ENCODE measurements at regions of chr11 and their contacts with region 1.

Region 1: DNA sequence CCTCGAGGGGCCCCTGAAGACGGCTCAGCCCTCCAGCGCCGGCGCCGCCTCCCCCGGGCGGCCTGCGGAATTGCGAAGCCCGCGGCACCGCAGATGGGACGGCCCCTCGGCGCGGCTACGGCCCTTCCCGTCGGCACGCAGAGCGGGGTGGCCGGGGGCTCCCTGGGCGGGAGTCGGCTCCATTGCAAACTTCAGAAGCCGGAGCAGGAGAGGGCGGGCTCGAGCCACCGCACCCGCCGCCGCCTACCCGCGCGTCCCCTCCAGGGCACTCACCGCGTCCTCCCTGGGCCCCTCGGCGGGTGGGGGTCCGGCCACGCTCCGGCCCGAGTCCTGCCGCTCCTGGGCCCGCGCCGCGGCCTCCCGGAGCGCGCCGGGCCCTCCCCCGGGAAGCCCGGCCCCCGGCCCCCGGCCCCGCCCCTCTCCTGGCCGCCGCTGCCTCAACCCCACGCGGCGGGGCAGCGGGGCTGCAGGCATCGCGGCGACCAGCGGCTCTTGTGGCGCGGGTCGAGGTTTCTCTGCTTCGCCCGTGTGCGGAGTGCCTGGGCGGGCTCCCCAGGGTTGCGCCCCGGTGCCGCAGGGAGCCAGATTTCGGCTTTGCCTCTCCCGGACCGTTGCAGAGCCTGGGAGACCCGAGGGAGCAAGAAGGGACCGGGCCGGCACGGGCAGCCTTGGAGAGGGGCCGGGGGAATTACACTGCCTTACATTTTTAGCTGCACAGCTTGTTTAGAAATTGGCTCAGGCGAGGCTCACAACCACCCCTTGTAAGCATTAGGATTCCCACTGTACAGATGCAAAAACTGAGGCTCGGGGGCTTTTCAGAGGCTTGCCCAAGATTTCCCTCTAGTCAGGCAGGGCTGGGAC is at the start of gene PACSIN3:
- DNase-seq: peak; percentile 49 to 84 (median 77)
- ATAC-seq: peak; percentile 56 to 61
- H3K4me3 ChIP-seq: peak within 1 kb of the TSS; percentile 70
- H3K27ac ChIP-seq: peak within 1 kb of the TSS; percentile 97
- H3K4me1 ChIP-seq: no peaks in the 10 kb centered on the region
- H3K27me3 ChIP-seq: no peaks in the 10 kb centered on the region
- total RNA-seq, gene PACSIN3: 110 to 156 (median 123) TPM

Region 2: GRCh38 chr11:47259178-47259977 is 73.1 kb after region 1 on chr11:
- intact Hi-C with region 1: loop called in 1 of 4 experiments (anchors 5 kb)
- DNase-seq: no peak
- ATAC-seq: peak; percentile 10 to 20
- H3K4me3 ChIP-seq: no peak overlapping the region
- H3K27ac ChIP-seq: peak overlapping the region; percentile 49
- H3K4me1 ChIP-seq: peaks cover 11% of the 10 kb centered on the region
- H3K27me3 ChIP-seq: no peaks in the 10 kb centered on the region

Measured in right cardiac atrium (tissue), 5 donors.